RWPE1 (cell line): ENCODE measurements at regions of chr2 and their contacts with region 1.

Region 1: DNA sequence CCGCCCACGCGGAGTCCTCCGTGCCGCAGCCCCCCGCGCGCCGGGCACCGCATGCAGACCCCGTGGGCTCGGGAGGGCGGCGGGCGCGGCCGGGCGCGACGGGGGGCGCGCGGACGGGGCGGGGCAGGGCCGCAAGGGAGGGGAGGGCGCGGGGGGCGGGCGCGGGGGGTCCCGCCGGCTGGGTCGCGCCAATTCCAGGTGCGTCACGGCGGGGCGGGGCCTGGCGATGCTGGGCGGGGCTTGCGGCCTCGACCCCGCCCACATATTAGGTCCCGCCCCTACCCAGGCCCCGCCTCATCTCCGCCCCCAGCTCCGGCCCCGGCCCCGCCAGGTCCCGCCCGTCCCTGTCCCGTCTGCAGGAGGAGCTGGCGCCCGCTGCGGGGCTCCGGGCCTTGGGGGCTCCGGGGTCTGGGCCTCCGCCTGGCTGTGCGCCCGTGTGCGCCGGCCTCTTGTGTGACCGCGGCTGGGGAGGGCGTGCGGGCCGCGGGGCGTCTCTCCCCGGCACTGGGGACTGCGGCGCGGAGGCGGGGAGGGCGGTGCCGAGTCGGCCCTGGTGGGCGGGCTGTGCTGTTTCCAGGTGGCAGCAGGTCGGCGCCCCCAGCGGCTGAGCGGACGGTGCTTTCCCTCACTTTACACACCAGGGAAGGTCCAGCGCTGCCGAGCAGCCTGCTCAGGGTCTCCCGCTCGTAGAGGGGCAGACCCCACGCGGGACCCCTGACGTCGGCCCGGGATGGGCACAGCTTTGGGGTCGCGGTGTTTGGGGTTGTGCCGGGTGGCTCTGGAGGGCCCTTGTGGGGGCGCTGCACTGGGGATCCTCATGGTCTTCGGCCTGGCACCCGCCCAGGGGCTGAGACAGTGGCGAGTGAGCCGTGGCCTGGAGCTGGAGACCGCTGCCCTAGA is 543 bp downstream of the ING5 start:
- DNase-seq: peak; percentile 85
- H3K27ac ChIP-seq: peak overlapping the region; percentile 94
- CTCF ChIP-seq: peak; percentile 64

Region 2: GRCh38 chr2:241686649-241687425 is 15.5 kb before region 1 on chr2 and contains the start of gene DTYMK:
- CTCF ChIA-PET with region 1: no interaction called
- POLR2A ChIA-PET with region 1: interaction called, 13 read pairs
- DNase-seq: peak; percentile 97
- H3K27ac ChIP-seq: peak within 1 kb of the TSS; percentile 82
- CTCF ChIP-seq: no peak

Region 3: DNA sequence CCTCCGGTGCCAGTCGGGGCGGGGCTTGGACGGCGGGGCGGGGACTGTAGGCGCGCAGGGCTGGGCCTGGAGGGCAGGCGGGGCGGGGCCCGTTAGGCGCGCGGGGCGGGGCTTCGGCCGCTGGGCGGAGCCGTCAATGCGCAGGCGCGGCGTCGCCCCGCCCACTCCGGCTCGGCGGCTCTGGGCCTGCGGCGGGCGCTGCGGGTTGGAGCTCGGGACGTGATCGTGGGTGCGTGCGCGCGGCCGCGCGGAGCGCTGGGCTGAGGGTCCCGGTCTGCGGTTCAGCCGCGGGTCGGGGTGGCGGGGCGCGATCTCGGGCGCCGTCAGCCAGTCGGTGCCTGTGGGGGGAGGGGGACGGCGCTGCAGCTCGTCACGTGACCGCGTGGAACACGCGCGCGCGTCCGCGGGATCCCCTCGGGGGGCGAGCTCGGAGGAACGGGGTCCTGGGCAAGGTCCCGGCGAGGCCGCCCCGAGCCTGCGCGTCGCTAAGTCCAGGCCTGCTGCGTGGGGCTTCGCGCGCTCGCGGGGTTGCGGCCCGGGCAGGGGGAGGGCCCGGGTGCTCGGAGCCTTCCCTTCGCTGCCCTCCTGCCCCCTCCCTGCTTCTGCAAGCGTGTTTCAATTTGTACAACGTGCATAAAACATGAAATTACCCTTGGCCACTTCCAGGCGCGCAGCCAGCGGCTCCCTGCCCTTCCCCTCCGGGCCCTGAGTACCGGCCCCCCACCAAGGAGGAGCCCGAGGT is 32.3 kb after region 1 on chr2 and contains the start of gene D2HGDH:
- CTCF ChIA-PET with region 1: no interaction called
- POLR2A ChIA-PET with region 1: interaction called, 15 read pairs
- DNase-seq: peak; percentile 90
- H3K27ac ChIP-seq: peak within 1 kb of the TSS; percentile 96
- CTCF ChIP-seq: no peak

Region 4: DNA sequence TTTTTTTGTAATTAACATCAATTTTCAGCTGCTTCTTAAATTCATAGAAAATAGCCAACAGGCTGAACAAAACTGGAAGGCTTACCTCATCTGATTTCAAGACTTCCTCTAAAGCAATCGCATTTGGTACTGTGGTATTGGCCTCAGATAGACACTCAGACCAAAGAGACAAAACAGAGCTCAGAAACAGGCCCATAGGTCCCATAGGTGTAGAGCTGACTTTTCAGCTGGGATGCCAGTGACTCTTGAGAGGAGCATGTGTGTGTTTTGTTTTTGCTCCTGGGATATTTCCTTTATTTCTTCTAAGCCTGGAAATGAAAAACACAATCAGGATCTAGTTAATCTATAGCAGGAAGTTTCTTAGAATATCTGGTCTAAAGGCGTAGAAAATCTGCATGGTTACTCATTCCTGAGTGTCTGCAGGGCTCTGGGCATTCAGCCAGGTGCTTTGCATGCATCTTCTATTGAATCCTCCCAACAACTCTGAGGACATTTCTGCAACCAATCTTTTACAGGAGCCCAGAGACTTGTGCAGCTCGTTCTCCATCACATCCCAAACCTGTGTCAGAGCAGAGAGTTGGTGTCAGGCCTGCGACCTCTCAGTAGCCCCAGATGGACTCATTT is 357.9 kb after region 1 on chr2:
- CTCF ChIA-PET with region 1: no interaction called
- POLR2A ChIA-PET with region 1: no interaction called
- DNase-seq: peak; percentile 44
- H3K27ac ChIP-seq: no peak overlapping the region
- CTCF ChIP-seq: no peak